Endothelial cell of umbilical vein (primary cell): ENCODE measurements at regions of chr10 and their contacts with region 1.

Region 1: DNA sequence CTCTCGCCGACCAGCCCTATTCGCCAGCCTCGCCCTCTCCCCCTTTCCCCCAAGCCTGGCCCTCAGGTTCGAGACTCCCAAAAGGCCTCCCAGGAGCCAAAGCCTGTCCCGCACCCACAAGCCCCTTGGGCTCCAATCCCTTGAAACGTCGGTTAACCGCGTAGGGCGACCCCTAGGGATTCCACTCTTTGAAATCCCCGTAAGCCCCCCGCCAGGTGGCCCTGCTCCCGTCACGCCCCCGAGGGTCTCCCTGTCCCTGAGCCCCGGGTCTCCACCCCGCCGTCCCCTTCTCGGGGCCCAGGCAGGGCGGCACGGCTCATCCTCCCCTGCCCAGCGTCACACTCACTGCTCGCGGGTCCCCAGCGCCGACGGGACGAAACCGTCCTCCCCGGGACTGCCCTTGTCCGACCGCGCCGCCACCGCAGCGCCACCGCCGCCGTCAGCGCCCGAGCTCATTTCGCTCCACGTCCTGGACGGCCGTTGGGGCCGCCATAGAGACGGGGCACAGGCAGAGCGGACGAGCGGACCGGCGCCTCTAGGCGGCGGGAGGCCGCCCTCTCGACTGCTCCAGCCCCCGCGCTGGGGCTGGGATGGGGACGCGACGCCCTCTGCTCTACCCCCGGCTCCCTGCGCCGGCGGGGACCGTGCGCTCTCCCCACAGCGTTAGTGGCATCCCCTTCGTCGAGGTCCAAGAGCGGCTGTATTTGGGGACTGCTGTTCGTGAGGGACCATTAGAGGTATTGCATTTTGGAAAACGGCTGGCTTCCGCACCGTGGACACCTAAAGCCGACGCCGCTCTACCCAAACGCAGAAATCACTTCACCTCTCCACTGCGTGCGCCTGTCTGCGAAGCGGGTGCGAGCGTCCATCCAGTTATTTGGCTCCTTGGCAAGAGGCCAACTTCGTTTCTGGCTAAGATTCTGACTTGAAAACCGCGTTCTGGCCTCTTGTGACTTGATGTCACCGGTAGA is at the start of gene EEF1AKMT2:
- DNase-seq: peak; percentile 87
- H3K4me3 ChIP-seq: peak within 1 kb of the TSS; percentile 67 to 78 (median 72)
- H3K27ac ChIP-seq: peak within 1 kb of the TSS; percentile 60
- H3K4me1 ChIP-seq: peaks cover 2% of the 10 kb centered on the region
- H3K27me3 ChIP-seq: peaks cover 0 to 1% of the 10 kb centered on the region in 2 experiments
- CTCF ChIP-seq: no peak
- POLR2A ChIP-seq: peak; percentile 86
- total RNA-seq, gene EEF1AKMT2: 17.1 and 21.3 TPM in 2 replicates

Region 2: GRCh38 chr10:124802313-124802675 is 10.6 kb after region 1 on chr10:
- CTCF ChIA-PET with region 1: interaction called, 11 read pairs
- POLR2A ChIA-PET with region 1: interaction called, 7 read pairs
- dilution Hi-C with region 1: no loop called
- intact Hi-C with region 1: loop called (anchors 1 kb)
- DNase-seq: peak; percentile 31
- H3K4me3 ChIP-seq: peak overlapping the region; percentile 69 to 76 (median 72)
- H3K27ac ChIP-seq: peak overlapping the region; percentile 65
- H3K4me1 ChIP-seq: peaks cover 15% of the 10 kb centered on the region
- H3K27me3 ChIP-seq: no peaks in the 10 kb centered on the region
- CTCF ChIP-seq: no peak
- POLR2A ChIP-seq: no peak